Motor neuron (in vitro differentiated cells): ENCODE measurements at regions of chr2 and their contacts with region 1.

Region 1: DNA sequence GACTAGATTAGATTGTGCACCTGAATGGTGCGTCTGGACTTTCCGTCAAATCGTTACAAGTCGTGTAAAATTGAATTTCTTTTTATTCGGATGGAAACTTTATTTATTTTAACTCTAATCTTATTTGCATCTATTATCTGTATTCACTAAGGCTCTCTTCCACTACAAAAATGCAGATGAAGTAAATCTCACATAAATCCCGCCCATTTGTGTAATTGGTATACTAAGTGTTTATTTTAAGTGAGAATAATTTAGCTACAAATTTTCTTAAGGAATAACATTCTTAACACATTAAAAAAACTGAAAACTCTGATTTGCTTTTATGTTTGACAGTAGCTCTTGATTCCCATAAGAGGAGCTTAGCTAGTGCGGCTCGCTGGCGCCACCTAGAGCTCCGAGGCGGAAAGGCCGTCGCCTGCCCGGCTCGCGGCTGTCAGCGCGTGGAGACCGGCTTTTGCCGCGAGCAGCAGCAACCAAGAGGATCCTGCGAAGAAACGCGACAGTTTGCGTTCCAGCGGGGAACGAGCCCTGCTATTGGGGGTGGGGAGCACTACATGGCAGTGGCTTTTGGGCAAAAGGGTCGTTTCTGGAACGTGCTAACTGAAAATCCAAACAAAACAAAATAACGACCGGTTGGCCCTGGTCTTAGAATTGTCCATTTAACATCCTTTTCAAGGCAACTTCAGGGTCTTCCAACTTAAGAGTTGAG is 6.7 kb downstream of the SP9 start:
- ATAC-seq: peak; percentile 47 to 91 (median 60)
- H3K4me3 ChIP-seq: peak overlapping the region in 3 of 5 donors; percentile 9 to 50 (median 13)
- H3K27ac ChIP-seq: no peak overlapping the region
- H3K4me1 ChIP-seq: peaks cover 9 to 14% of the 10 kb centered on the region in 2 donors

Region 2: GRCh38 chr2:173027181-173028128 is 1314.0 kb before region 1 on chr2:
- in situ Hi-C with region 1: loop called in 3 of 9 experiments (anchors 10 to 25 kb)
- ATAC-seq: peak; percentile 74 to 85 (median 77)
- H3K4me3 ChIP-seq: no peak overlapping the region
- H3K27ac ChIP-seq: no peak overlapping the region
- H3K4me1 ChIP-seq: peaks cover 4% of the 10 kb centered on the region in 2 donors

Region 3: GRCh38 chr2:173402405-173402974 is 939.0 kb before region 1 on chr2:
- in situ Hi-C with region 1: loop called in 5 of 9 experiments (anchors 25 kb)
- ATAC-seq: peak; percentile 94 to 100 (median 99)
- H3K4me3 ChIP-seq: peak overlapping the region in 2 of 5 donors; percentile 3 to 13
- H3K27ac ChIP-seq: no peak overlapping the region
- H3K4me1 ChIP-seq: peaks cover 12 to 31% of the 10 kb centered on the region in 2 donors

Region 4: DNA sequence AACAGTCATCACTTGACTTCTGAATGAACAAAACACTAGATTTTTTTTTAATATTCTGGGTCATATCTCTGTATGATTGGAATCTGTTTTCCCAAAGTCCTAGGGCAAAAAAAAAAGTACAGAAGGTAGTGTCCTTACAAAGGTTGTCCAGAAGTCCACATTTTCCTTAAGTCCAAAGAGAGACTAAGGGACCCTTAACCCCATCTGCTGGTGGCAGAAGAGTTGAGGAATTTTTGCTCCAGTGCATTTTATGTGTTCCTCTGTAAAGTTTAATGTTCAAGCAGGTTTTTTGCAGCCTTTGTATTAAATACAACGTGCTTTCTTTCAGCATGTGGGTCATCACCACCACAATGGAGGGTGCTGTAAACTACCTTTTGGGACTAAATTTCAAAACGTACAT is 592.1 kb before region 1 on chr2:
- in situ Hi-C with region 1: loop called in 1 of 9 experiments (anchors 25 kb)
- ATAC-seq: peak in 1 of 8 experiments; percentile 20
- H3K4me3 ChIP-seq: no peak overlapping the region
- H3K27ac ChIP-seq: no peak overlapping the region
- H3K4me1 ChIP-seq: peaks cover 12 to 27% of the 10 kb centered on the region in 2 donors

Region 5: GRCh38 chr2:174158003-174158402 is 183.4 kb before region 1 on chr2:
- in situ Hi-C with region 1: loop called in 1 of 9 experiments (anchors 25 kb)
- ATAC-seq: peak in 4 of 8 experiments; percentile 52 to 87 (median 76)
- H3K4me3 ChIP-seq: no peak overlapping the region
- H3K27ac ChIP-seq: no peak overlapping the region
- H3K4me1 ChIP-seq: peaks cover 2 to 8% of the 10 kb centered on the region in 2 donors

Region 6: GRCh38 chr2:174248187-174248997 is 93.0 kb before region 1 on chr2 and contains the start of gene OLA1:
- in situ Hi-C with region 1: loop called in 1 of 9 experiments (anchors 25 kb)
- ATAC-seq: peak; percentile 95 to 98 (median 97)
- H3K4me3 ChIP-seq: peak within 1 kb of the TSS; percentile 56 to 94 (median 72)
- H3K27ac ChIP-seq: peak within 1 kb of the TSS; percentile 71 to 81
- H3K4me1 ChIP-seq: peaks cover 9 to 10% of the 10 kb centered on the region in 2 donors
- total RNA-seq, gene OLA1: 113 to 163 (median 130) TPM

Region 7: GRCh38 chr2:174835797-174836255 is 494.4 kb after region 1 on chr2:
- in situ Hi-C with region 1: no loop called
- ATAC-seq: peak in 7 of 8 experiments; percentile 15 to 70 (median 31)
- H3K4me3 ChIP-seq: no peak overlapping the region
- H3K27ac ChIP-seq: no peak overlapping the region
- H3K4me1 ChIP-seq: peaks cover 9 to 16% of the 10 kb centered on the region in 2 donors